ENCODE measurements at regions of chr11 and their contacts with region 1.

Region 1: DNA sequence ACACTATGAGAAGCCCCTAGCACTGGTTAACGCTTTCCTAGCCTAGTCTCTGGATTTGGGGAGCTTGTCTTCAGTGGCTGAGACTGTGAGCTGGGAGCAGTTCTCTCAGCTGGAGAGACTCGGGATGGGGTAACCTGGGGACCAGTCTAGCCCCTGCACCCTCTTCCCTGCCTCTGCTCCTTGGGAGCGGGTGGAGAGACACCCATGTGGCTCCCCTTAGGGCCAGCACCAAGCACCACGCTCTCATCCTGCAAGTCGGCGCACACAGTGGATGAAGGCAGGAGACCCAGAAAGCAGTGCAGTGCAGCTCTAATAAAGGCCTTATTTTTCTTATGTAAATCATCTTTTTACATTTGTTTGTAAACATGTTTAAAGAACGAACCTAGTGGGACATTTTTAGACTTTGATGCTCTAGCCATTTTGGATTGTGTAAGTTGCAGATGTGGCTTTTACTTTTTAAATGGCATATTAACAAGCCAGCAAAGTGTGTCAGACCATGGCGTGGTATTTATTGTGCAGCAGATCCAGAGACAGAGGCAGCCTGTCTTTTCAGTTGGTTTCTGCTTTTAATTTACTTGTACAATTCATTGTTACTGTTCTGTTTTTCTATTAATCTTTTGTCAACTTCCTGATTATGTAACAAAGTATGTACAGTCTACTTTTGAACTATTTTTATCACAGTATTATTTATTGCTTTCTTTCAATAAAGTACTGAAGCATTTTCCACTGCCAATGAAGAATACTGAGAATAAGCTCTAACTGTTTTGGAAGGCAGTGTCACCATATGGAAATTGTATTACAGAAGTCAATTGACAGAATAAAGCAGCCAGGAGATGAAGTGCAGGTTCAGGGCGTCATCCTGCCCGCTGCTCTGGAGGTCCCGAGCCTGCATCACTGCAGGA is 14.4 kb upstream of the CTTN start:
- DNase-seq: no peak
- ATAC-seq: no peak
- H3K4me3 ChIP-seq: no peak overlapping the region
- H3K4me3 Mint-ChIP-seq: no peak overlapping the region
- H3K27ac ChIP-seq: no peak overlapping the region
- H3K27ac Mint-ChIP-seq: no peak overlapping the region
- H3K4me1 ChIP-seq: no peaks in the 10 kb centered on the region
- H3K4me1 Mint-ChIP-seq: no peaks in the 10 kb centered on the region
- H3K27me3 ChIP-seq: no peaks in the 10 kb centered on the region
- H3K27me3 Mint-ChIP-seq: no peaks in the 10 kb centered on the region
- CTCF ChIP-seq: no peak

Region 2: GRCh38 chr11:70415642-70416395 is 31.9 kb after region 1 on chr11:
- CTCF ChIA-PET with region 1: no interaction called
- POLR2A ChIA-PET with region 1: no interaction called
- intact Hi-C with region 1: loop called in 1 of 2 experiments (anchors 1 kb)
- DNase-seq: peak in 1 of 14 experiments; percentile 34
- ATAC-seq: no peak
- H3K4me3 ChIP-seq: no peak overlapping the region
- H3K4me3 Mint-ChIP-seq: no peak overlapping the region
- H3K27ac ChIP-seq: no peak overlapping the region
- H3K27ac Mint-ChIP-seq: no peak overlapping the region
- H3K4me1 ChIP-seq: no peaks in the 10 kb centered on the region
- H3K4me1 Mint-ChIP-seq: no peaks in the 10 kb centered on the region
- H3K27me3 ChIP-seq: no peaks in the 10 kb centered on the region
- H3K27me3 Mint-ChIP-seq: no peaks in the 10 kb centered on the region
- CTCF ChIP-seq: no peak

Region 3: DNA sequence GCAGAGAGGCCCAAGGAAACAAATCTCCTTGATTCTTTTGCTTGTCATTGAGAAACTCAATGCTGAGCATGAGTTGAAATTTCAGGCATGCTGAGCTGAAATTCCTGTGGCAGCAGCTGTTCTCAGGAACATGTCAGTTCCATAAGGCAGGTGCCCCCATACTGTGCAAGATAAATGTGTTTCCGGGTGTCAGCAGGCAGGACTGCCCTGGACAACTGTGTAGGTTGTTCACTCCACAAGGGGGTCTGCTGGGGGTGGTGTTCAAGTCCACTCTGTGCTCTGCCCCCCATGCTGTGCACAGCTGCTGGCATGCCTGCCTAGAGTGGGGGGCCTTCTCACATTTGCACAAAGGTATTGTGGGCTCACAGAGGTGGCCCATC is 148.1 kb after region 1 on chr11:
- CTCF ChIA-PET with region 1: no interaction called
- POLR2A ChIA-PET with region 1: no interaction called
- intact Hi-C with region 1: no loop called
- DNase-seq: no peak
- ATAC-seq: no peak
- H3K4me3 ChIP-seq: no peak overlapping the region
- H3K4me3 Mint-ChIP-seq: no peak overlapping the region
- H3K27ac ChIP-seq: no peak overlapping the region
- H3K27ac Mint-ChIP-seq: no peak overlapping the region
- H3K4me1 ChIP-seq: no peaks in the 10 kb centered on the region
- H3K4me1 Mint-ChIP-seq: no peaks in the 10 kb centered on the region
- H3K27me3 ChIP-seq: no peaks in the 10 kb centered on the region
- H3K27me3 Mint-ChIP-seq: peaks cover 5% of the 10 kb centered on the region
- CTCF ChIP-seq: no peak